ENCODE measurements at regions of chr5 and their contacts with region 1.

Region 1: GRCh38 chr5:89313804-89314588 is 431.0 kb upstream of the MEF2C start:
- DNase-seq: no peak
- ATAC-seq: peak; percentile 94
- H3K4me3 Mint-ChIP-seq: peak overlapping the region; percentile 66
- H3K27ac Mint-ChIP-seq: peak overlapping the region; percentile 96
- H3K4me1 Mint-ChIP-seq: peaks cover 48% of the 10 kb centered on the region
- H3K27me3 Mint-ChIP-seq: no peaks in the 10 kb centered on the region
- CTCF ChIP-seq: no peak

Region 2: DNA sequence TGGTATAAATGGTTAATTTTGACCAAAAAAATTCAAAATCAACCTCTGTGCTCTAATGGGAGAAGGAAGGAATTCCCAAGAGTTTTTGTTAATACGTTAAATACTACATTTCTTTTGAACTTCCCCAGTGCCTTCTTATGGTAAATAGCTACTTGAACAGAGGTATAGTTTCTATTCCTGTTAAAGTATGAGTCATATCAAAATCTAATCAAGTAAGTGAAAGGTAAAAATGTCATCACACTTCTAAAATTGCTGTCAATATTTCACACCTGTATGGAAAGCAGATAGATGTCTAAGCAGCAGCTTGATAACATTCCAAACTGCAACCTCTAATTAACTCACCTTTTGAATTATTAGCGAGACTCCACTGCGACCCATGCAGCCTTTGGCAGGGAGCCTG is 216.9 kb before region 1 on chr5:
- CTCF ChIA-PET with region 1: no interaction called
- POLR2A ChIA-PET with region 1: no interaction called
- intact Hi-C with region 1: loop called (anchors 5 kb)
- DNase-seq: no peak
- ATAC-seq: peak; percentile 25
- H3K4me3 Mint-ChIP-seq: peak overlapping the region; percentile 38
- H3K27ac Mint-ChIP-seq: peak overlapping the region; percentile 69
- H3K4me1 Mint-ChIP-seq: peaks cover 14% of the 10 kb centered on the region
- H3K27me3 Mint-ChIP-seq: no peaks in the 10 kb centered on the region
- CTCF ChIP-seq: no peak

Region 3: GRCh38 chr5:89293810-89294209 is 20.2 kb before region 1 on chr5:
- CTCF ChIA-PET with region 1: no interaction called
- POLR2A ChIA-PET with region 1: interaction called, 6 read pairs
- intact Hi-C with region 1: loop called (anchors 1 kb)
- DNase-seq: no peak
- ATAC-seq: peak; percentile 52
- H3K4me3 Mint-ChIP-seq: peak overlapping the region; percentile 54
- H3K27ac Mint-ChIP-seq: peak overlapping the region; percentile 68
- H3K4me1 Mint-ChIP-seq: peaks cover 37% of the 10 kb centered on the region
- H3K27me3 Mint-ChIP-seq: no peaks in the 10 kb centered on the region
- CTCF ChIP-seq: no peak

Region 4: DNA sequence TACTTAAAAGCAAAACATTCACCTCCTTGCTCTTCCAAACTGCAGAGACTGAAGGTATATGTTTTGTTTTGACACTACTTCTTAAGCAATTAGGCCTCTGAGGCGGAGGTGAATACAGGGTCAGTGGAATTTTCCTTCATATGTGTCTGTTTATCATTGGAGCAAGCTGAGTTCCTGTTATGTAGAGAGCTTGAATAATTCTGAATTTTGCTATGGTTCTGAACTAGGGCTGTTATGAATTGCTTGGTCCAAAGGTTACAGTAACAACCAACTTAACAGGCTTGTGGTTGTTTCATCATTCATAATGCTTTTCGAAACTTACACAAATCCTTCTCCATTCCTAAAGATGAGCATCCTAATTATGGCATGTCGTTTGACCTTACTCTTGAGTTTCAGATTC is 13.6 kb after region 1 on chr5:
- CTCF ChIA-PET with region 1: no interaction called
- POLR2A ChIA-PET with region 1: interaction called, 11 read pairs
- intact Hi-C with region 1: loop called (anchors 2 kb)
- DNase-seq: no peak
- ATAC-seq: no peak
- H3K4me3 Mint-ChIP-seq: no peak overlapping the region
- H3K27ac Mint-ChIP-seq: peak overlapping the region; percentile 68
- H3K4me1 Mint-ChIP-seq: peaks cover 41% of the 10 kb centered on the region
- H3K27me3 Mint-ChIP-seq: no peaks in the 10 kb centered on the region
- CTCF ChIP-seq: no peak

Region 5: DNA sequence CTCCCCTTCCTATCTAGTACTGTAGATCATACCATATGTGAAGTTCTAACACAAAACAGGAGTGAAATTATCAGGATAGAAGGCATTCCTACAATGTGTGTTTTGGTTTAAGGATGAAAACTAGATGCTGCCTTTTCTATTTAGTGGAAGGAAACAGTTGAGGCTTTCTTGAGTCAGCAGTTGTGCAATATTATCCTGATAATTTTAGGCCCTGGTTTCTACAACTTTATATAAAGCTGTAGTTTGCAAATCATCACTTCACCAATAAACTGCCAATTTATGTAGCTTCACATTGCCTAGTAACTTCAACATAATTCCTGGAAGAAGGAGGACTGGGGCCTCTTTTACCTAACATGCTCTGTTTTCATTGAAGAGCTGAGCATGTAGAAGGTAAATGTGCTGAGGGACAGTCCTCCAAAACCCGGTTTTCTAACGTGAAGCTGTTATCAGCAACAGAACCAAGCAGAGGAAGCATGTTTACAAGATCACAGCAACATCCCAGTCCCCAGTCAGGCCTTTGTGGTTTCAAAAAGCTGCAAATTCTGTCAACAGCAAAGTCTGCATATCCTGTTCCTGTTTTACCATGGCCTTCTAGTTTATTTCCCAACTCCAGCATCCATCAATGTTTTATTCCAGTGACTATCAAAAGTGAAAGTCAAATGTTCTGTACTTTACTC is 82.4 kb after region 1 on chr5:
- CTCF ChIA-PET with region 1: no interaction called
- POLR2A ChIA-PET with region 1: interaction called, 4 read pairs
- intact Hi-C with region 1: loop called (anchors 5 kb)
- DNase-seq: no peak
- ATAC-seq: peak; percentile 59
- H3K4me3 Mint-ChIP-seq: peak overlapping the region; percentile 60
- H3K27ac Mint-ChIP-seq: peak overlapping the region; percentile 88
- H3K4me1 Mint-ChIP-seq: peaks cover 61% of the 10 kb centered on the region
- H3K27me3 Mint-ChIP-seq: no peaks in the 10 kb centered on the region
- CTCF ChIP-seq: no peak

Measured in activated B cell treated with CpG ODN at 0.5 μM for 24 hours (primary cell).